Dorsolateral prefrontal cortex (tissue), 120 donors: ENCODE measurements at regions of chr2 and their contacts with region 1.

Region 1: GRCh38 chr2:37389989-37390765 is 45.7 kb downstream of the QPCT start:
- DNase-seq: peak in 3 of 10 donors; percentile 35 to 61 (median 43)
- H3K4me3 ChIP-seq: no peak overlapping the region
- H3K27ac ChIP-seq: peak overlapping the region in 38 of 59 donors; percentile 0 to 77 (median 44)
- H3K27me3 ChIP-seq: no peaks in the 10 kb centered on the region
- CTCF ChIP-seq: no peak

Region 2: DNA sequence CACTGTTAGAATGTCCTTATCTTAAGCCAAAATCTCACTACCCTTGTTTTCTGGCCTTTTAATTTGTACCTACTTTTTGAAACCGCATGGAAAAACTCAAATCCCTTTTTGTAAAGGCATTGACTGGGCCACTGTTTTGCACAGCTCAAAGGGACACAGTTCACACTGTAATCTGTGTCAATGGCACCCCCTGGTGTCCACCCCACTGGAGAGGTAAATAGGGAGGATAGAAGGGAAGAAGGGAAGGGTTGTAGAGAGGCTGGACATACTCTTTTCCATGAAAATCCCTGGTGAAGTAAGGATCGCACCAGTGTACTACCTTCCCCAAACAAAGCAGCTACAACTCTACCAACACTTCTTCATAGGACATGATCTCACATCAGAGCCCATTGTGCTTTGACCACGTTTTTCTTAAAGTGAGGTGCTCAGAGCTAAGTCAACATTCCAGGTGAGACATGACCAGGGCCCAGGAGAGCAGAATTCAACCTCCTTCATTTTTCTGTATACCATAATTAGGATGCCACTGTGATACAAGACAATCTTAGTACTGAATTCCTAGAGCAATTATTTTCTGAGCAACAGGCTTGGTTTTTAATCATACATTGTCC is 442.5 kb after region 1 on chr2:
- intact Hi-C with region 1: loop called (anchors 5 kb)
- DNase-seq: peak; percentile 44 to 93 (median 84)
- H3K4me3 ChIP-seq: no peak overlapping the region
- H3K27ac ChIP-seq: no peak overlapping the region
- H3K27me3 ChIP-seq: no peaks in the 10 kb centered on the region
- CTCF ChIP-seq: peak; percentile 61 to 93 (median 80)

Region 3: GRCh38 chr2:37871456-37872191 is 481.4 kb after region 1 on chr2:
- intact Hi-C with region 1: loop called in 1 of 2 experiments (anchors 5 kb)
- DNase-seq: no peak
- H3K4me3 ChIP-seq: no peak overlapping the region
- H3K27ac ChIP-seq: peak overlapping the region in 34 of 59 donors; percentile 0 to 80 (median 54)
- H3K27me3 ChIP-seq: peaks cover 0 to 2% (median 0%) of the 10 kb centered on the region in 45 donors
- CTCF ChIP-seq: no peak